Activated CD4-positive, alpha-beta T cell treated with anti-CD3 and anti-CD28 coated beads for 36 hours (primary cell): ENCODE measurements at regions of chr3 and their contacts with region 1.

Region 1: DNA sequence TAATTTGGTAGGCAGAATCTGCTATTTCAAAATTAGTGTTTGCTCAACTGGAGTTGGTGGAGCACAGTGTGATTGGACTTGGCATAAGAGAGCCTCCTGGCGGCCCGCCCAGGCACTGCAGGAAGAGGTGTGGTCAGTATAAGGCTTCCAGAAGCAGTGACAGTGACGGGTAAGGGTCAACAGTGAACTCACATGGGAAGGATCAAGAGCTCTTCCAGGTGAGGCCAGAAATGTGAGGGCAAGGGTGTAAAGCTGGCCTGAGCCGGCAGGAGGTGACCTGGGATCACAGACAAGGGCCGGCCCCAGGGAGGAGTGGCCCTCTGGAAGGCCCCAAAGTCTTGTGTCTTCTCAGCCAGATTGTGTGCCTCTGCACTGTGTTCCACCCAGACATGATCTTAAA is 93.2 kb upstream of the RNF7 start:
- DNase-seq: peak; percentile 88
- ATAC-seq: peak; percentile 95
- H3K4me3 Mint-ChIP-seq: no peak overlapping the region
- H3K27ac Mint-ChIP-seq: no peak overlapping the region
- H3K4me1 Mint-ChIP-seq: no peaks in the 10 kb centered on the region
- H3K27me3 Mint-ChIP-seq: no peaks in the 10 kb centered on the region

Region 2: GRCh38 chr3:141353652-141354495 is 291.1 kb before region 1 on chr3:
- CTCF ChIA-PET with region 1: no interaction called
- POLR2A ChIA-PET with region 1: no interaction called
- intact Hi-C with region 1: loop called in 1 of 2 experiments (anchors 10 kb)
- DNase-seq: no peak
- ATAC-seq: no peak
- H3K4me3 Mint-ChIP-seq: no peak overlapping the region
- H3K27ac Mint-ChIP-seq: no peak overlapping the region
- H3K4me1 Mint-ChIP-seq: no peaks in the 10 kb centered on the region
- H3K27me3 Mint-ChIP-seq: peaks cover 6% of the 10 kb centered on the region

Region 3: GRCh38 chr3:141913150-141913811 is 268.4 kb after region 1 on chr3:
- CTCF ChIA-PET with region 1: interaction called, 4 read pairs
- POLR2A ChIA-PET with region 1: no interaction called
- intact Hi-C with region 1: loop called in 1 of 2 experiments (anchors 5 kb)
- DNase-seq: peak; percentile 70
- ATAC-seq: peak; percentile 93
- H3K4me3 Mint-ChIP-seq: no peak overlapping the region
- H3K27ac Mint-ChIP-seq: no peak overlapping the region
- H3K4me1 Mint-ChIP-seq: no peaks in the 10 kb centered on the region
- H3K27me3 Mint-ChIP-seq: no peaks in the 10 kb centered on the region